Activated CD4-positive, alpha-beta memory T cell treated with anti-CD3 and anti-CD28 coated beads, Interleukin-2, amount 10 ng/mL, durations not matched to agents 7 days and 5 days (primary cell): ENCODE measurements at regions of chr17 and their contacts with region 1.

Region 1: DNA sequence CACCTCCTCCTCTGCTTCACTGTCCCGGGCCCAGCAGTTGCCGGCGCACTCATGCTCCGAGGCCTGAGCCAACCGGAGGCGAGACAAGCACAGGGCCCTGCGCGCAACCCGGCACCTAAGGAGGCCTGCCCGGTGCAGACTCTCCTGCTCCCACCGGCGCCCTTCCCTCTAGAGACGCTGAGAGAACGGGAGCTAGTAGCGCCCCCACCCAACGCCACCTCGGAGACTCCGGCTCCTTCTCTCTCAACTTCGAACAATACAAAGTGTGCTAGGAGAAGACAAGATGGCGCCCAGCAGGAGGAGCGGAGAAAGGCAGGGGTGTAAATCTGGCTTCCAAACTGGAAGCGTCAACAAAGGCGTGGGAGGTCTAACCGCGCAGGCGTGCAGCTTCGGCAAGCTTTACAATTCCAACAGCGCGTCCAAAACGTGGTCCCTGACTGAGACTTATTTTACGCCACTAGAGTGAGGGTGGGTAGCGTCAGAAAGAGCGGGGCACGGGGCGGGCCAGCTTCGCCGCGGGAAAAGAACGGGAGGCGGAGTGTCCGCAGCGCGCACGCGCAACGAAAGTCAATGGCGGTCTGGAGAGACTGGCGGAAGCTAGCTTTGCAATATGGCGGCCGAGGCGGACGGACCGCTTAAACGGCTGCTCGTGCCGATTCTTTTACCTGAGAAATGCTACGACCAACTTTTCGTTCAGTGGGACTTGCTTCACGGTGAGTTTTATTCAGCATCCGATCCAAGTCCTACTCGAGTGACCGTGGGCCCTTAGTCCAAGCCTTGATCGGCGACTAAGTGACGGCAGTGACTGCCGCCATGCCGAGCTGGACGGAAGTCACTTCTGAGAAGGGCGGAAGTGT is at the start of gene MPDU1:
- DNase-seq: peak; percentile 96
- H3K4me3 Mint-ChIP-seq: peak within 1 kb of the TSS; percentile 97
- H3K27ac Mint-ChIP-seq: peak within 1 kb of the TSS; percentile 99
- H3K4me1 Mint-ChIP-seq: peaks cover 68% of the 10 kb centered on the region
- H3K27me3 Mint-ChIP-seq: no peaks in the 10 kb centered on the region
- total RNA-seq, gene MPDU1: 54.1 to 58.6 TPM

Region 2: GRCh38 chr17:7336240-7337175 is 247.0 kb before region 1 on chr17 and contains the start of gene ACAP1:
- CTCF ChIA-PET with region 1: no interaction called
- POLR2A ChIA-PET with region 1: interaction called, 14 read pairs
- DNase-seq: peak; percentile 93
- H3K4me3 Mint-ChIP-seq: peak within 1 kb of the TSS; percentile 91
- H3K27ac Mint-ChIP-seq: peak within 1 kb of the TSS; percentile 91
- H3K4me1 Mint-ChIP-seq: peaks cover 59% of the 10 kb centered on the region
- H3K27me3 Mint-ChIP-seq: no peaks in the 10 kb centered on the region
- total RNA-seq, gene ACAP1: 682 to 709 TPM

Region 3: GRCh38 chr17:7403977-7404736 is 179.3 kb before region 1 on chr17 and contains the start of gene TMEM256:
- CTCF ChIA-PET with region 1: no interaction called
- POLR2A ChIA-PET with region 1: interaction called, 10 read pairs
- DNase-seq: peak; percentile 98
- H3K4me3 Mint-ChIP-seq: peak within 1 kb of the TSS; percentile 95
- H3K27ac Mint-ChIP-seq: peak within 1 kb of the TSS; percentile 91
- H3K4me1 Mint-ChIP-seq: peaks cover 27% of the 10 kb centered on the region
- H3K27me3 Mint-ChIP-seq: peaks cover 15% of the 10 kb centered on the region
- total RNA-seq, gene TMEM256: 73.2 to 77.0 TPM

Region 4: GRCh38 chr17:7530023-7530900 is 53.2 kb before region 1 on chr17:
- CTCF ChIA-PET with region 1: no interaction called
- POLR2A ChIA-PET with region 1: no interaction called
- DNase-seq: no peak
- H3K4me3 Mint-ChIP-seq: no peak overlapping the region
- H3K27ac Mint-ChIP-seq: no peak overlapping the region
- H3K4me1 Mint-ChIP-seq: no peaks in the 10 kb centered on the region
- H3K27me3 Mint-ChIP-seq: peaks cover 5% of the 10 kb centered on the region

Region 5: GRCh38 chr17:7548585-7549400 is 34.7 kb before region 1 on chr17 and contains the start of gene TNFSF12:
- CTCF ChIA-PET with region 1: interaction called, 5 read pairs
- POLR2A ChIA-PET with region 1: interaction called, 16 read pairs
- DNase-seq: peak; percentile 73
- H3K4me3 Mint-ChIP-seq: peak within 1 kb of the TSS; percentile 99
- H3K27ac Mint-ChIP-seq: peak within 1 kb of the TSS; percentile 93
- H3K4me1 Mint-ChIP-seq: peaks cover 58% of the 10 kb centered on the region
- H3K27me3 Mint-ChIP-seq: no peaks in the 10 kb centered on the region
- total RNA-seq, gene TNFSF12: 79.8 to 86.7 TPM

Region 6: DNA sequence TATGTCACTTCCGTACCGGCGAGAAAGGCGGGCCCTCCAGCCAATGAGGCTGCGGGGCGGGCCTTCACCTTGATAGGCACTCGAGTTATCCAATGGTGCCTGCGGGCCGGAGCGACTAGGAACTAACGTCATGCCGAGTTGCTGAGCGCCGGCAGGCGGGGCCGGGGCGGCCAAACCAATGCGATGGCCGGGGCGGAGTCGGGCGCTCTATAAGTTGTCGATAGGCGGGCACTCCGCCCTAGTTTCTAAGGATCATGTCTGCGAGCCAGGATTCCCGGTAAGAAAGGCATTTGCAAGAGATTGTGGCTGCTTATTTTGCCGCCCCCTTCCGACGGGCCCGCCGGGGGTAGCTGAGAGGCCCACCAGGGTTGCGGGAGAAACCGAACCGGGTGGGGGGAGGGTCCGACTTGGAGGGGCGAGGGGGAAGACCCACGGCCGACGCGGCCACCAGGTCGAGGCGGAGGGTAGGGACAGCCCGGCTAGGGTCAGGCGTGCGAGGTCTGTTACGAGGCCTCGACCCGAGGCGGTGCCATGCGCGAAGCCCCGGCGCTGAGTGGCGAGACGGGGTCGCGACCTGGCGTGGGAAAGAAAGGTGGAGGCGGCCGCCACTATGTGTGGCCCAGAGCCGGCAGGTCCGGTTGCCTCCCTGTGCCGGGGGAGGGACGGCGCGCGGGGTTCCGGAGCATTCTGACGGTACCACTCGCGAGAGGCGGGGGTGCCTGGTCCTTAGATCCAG is 10.7 kb before region 1 on chr17:
- CTCF ChIA-PET with region 1: interaction called, 13 read pairs
- POLR2A ChIA-PET with region 1: interaction called, 169 read pairs
- DNase-seq: peak; percentile 100
- H3K4me3 Mint-ChIP-seq: peak overlapping the region; percentile 93
- H3K27ac Mint-ChIP-seq: peak overlapping the region; percentile 99
- H3K4me1 Mint-ChIP-seq: peaks cover 63% of the 10 kb centered on the region
- H3K27me3 Mint-ChIP-seq: no peaks in the 10 kb centered on the region

Region 7: DNA sequence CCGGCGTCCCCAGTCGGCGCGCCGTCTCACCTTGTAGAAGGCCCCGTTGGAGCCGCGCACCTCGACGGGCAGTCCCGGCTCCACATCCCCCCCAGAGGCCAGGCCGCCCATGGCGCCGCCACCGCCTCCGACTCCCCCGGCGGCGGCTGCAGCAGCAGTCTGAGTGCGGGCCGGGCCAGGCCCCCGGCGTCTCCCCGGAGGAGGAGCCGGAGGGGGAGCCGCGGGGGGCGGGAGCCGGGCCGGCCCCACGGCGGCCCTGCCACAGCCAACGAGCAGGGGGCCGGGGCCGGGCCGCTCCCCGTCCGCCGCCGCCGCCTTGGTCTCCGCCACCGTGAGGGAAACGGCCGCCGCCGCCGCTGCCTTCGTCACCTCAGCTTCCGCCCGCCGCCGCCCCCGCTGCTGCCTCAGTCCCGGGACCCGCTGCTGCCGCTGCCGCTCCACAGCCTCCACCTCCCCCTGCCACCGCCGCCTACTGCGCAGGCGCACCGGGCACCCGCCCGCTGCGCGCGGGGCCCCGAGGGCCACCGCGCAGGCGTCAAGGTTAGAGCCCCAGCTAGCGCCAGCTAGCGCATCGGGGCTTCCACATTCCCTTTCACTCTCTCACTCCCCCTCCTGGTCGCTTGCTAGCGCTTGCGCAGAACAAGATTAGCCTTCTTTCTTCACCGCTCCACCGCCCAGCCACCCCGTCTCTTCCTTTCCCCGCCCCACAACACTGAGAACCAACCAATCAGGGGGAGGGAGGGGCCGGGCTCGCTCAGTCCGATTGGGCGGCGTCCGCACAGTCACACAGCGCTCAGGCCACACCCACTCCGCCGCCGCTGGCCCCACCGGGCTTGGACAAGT is 31.2 kb after region 1 on chr17 and contains the start of gene FXR2:
- CTCF ChIA-PET with region 1: interaction called, 7 read pairs
- POLR2A ChIA-PET with region 1: interaction called, 12 read pairs
- DNase-seq: peak; percentile 99
- H3K4me3 Mint-ChIP-seq: peak within 1 kb of the TSS; percentile 89
- H3K27ac Mint-ChIP-seq: peak within 1 kb of the TSS; percentile 82
- H3K4me1 Mint-ChIP-seq: peaks cover 27% of the 10 kb centered on the region
- H3K27me3 Mint-ChIP-seq: no peaks in the 10 kb centered on the region
- total RNA-seq, gene FXR2: 30.4 to 31.2 TPM

Region 8: DNA sequence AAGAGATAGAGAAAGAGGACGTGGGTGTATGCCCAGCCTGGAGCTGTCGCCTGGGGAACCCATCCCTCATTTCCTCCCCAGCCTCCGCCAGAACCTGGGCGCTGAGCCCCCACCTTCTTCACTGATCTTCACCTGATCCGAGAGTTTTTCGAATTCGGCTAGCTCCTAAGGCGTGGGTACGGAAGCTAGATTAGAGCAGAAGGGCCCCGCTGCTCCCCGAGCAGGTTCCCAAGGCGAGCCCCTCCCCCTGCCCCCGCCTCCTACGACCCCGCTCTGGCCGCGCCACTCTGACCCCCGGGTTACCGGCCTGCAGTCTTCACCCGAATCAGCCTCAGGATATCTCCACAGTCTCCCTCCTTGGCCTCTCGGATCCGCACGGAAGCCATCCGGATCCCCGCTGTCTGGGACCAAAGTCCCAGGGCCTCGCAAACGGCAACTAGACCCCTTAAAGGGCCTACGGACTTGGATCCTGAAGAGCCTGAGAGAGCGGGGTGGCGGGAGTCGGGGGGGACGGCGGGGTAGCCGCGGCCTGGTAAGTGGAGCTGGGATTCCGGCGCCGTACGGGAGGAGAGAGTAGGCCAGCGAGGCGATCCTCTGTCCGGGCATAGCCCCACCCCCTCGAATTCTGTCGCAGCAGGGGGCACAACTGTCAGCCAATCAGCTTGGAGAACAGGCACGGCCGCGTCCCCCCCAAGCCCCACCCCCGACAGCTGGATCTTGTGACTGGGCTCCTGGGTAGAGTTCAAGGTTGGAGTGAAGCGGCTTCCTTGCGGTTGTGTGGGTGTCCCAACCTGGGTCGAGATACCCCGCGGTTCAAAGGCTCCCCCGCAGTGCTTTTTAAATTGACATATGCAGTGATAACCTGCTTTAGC is 44.0 kb after region 1 on chr17 and contains the start of gene SAT2:
- CTCF ChIA-PET with region 1: interaction called, 3 read pairs
- POLR2A ChIA-PET with region 1: interaction called, 13 read pairs
- DNase-seq: peak; percentile 88
- H3K4me3 Mint-ChIP-seq: peak within 1 kb of the TSS; percentile 92
- H3K27ac Mint-ChIP-seq: peak within 1 kb of the TSS; percentile 47
- H3K4me1 Mint-ChIP-seq: peaks cover 16% of the 10 kb centered on the region
- H3K27me3 Mint-ChIP-seq: no peaks in the 10 kb centered on the region
- total RNA-seq, gene SAT2: 36.2 to 37.9 TPM